Motor neuron (in vitro differentiated cells): ENCODE measurements at regions of chr6 and their contacts with region 1.

Region 1: DNA sequence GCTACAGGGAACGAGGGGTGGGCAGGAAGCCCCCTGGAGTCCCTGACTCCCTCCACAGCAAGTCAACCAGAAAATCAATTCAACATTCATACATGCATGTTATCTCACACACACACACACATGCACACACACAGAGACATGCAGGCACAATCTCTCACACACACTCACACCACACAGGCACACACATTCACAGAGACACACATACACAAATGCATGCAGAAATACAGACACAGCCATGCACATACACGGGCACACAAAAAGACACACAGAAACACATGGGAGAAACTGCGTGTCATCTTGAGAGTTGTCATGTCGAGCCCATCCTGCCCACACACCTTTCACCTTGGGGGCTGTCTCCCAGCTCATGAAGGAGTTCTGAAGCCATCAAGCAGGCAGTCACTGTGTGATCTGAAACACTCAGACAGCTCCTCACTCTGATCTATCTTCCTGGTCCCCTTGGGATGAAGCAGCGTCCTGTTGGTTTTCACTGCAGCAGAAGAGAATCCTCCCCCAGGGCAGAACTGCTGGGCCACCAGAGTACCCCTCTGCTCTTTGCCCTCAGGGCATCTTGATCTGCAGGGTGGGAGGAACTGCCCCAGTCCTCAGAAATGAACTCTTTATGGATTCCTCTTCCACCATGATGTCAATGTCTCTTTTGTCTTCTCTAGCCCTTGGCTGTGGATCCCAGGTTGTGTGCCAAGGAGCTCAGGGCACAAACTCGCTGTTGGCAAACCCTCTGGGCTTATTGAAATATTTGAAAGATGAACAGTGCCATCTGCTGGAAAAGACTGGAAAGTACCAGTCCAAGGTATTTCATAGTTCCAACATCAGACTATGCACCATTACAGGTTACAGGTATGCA is 8.8 kb downstream of the RAET1L start:
- ATAC-seq: peak; percentile 35 to 81 (median 60)
- H3K4me3 ChIP-seq: no peak overlapping the region
- H3K27ac ChIP-seq: no peak overlapping the region
- H3K4me1 ChIP-seq: no peaks in the 10 kb centered on the region

Region 2: DNA sequence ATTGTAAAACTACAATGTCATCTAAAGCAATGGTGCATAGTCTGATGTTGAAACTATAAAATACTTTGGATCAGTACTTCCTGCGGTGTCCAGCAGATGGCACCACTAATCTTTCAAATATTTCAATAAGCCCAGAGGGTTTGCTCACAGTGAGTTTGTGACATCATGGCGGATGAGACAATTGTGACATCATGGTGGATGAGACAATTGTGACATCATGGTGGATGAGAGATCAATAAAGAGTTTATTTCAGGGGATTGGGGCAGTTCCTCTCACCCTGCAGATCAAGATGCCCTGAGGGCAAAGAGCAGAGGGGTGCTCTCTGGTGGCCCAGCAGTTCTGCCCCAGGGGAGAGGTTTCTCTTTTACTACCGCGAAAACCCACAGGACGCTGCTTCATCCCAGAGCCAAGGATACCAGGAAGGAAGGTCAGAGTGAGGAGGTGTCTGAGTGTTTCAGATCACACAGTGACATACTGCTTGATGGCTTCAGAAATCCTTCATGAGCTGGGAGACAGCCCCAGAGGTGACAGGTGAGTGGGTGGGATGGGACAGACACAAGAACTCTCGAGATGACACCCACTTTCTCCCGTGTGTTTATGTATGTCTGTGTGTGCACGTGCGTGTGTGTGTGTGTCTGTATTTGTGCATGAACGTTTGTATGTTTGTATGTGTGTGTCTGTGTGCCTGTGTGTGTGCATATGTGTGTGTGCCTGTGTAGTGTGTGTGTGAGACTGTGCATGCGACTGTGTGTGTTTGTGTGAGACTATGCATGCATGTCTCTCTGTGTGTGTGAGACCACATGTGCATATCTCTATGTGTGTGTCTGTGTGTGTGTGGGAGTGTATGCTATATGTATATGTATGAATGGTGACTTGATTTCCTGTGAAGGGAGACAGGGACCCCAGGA is 82.1 kb before region 1 on chr6:
- in situ Hi-C with region 1: loop called in 1 of 9 experiments (anchors 10 kb)
- ATAC-seq: peak; percentile 16 to 65 (median 56)
- H3K4me3 ChIP-seq: no peak overlapping the region
- H3K27ac ChIP-seq: no peak overlapping the region
- H3K4me1 ChIP-seq: peaks cover 4 to 10% of the 10 kb centered on the region in 2 donors

Region 3: DNA sequence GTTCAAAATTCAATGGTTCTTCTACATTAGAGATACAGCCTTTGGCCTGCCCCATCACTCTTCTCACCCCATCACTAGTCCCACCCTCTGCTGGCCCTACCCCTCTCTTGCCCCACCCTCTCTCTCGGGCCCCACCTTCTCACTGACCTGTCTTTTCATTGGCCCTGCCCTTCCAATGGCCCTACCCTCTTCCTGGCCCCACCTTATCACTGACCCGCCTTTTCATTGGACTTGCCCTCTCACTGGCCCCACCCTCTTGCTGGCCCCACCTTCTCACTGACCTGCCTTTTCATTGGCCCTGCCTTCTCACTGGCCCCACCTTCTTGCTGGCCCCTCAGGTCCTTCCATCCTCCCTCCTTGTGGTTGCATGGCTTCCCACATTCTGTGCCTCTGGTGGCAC is 476.0 kb after region 1 on chr6:
- in situ Hi-C with region 1: no loop called
- ATAC-seq: peak in 2 of 8 experiments; percentile 34 to 36
- H3K4me3 ChIP-seq: no peak overlapping the region
- H3K27ac ChIP-seq: no peak overlapping the region
- H3K4me1 ChIP-seq: no peaks in the 10 kb centered on the region